ENCODE measurements at regions of chr9 and their contacts with region 1.

Region 1: DNA sequence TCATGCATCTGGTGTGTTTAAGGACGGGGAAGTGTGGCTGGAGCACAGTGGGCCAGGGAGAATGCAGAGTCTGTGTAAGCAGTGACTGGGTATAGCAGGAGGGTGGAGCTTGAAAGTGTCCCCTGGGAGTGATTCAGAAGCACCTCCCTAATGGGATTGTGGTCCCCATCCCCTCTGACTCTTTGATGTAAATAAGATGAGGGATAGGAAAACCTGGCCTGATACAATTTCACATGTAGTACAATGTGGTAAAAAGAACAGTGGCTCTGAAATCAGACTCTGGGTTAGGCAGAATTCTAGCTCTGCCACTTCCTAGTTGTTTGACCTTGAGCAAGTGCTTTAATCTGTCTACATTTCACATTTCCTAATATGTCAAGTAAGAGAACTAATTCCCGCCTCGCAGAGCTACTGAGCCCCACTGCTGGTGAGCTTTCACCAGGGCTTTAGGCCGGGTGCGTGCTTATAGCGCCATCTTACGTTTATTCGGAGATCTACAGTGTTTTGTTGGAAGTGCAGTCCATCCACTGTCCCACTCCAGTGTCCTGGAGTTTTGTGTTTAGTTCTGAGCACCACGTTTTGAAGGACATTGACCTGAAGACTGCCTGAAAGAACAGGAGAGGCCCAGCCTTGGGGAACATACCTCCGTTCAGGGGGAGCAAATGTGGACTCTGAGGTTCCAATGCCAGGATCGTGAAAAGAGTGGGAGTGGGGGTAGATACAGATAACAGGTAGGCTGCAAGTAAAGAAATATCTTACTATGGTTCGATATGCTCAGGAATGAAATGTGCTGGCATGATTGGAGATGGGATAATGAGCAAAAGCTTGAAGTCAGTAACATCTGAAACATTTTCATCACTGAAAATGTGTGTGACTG is 51.2 kb upstream of the TESK1 start:
- DNase-seq: peak in 8 of 10 donors; percentile 54 to 78 (median 67)
- H3K4me3 ChIP-seq: peak overlapping the region in 13 of 59 donors; percentile 1 to 38 (median 19)
- H3K27ac ChIP-seq: peak overlapping the region in 53 of 59 donors; percentile 7 to 86 (median 68)
- H3K27me3 ChIP-seq: no peaks in the 10 kb centered on the region
- CTCF ChIP-seq: peak; percentile 75 to 97 (median 92)

Region 2: DNA sequence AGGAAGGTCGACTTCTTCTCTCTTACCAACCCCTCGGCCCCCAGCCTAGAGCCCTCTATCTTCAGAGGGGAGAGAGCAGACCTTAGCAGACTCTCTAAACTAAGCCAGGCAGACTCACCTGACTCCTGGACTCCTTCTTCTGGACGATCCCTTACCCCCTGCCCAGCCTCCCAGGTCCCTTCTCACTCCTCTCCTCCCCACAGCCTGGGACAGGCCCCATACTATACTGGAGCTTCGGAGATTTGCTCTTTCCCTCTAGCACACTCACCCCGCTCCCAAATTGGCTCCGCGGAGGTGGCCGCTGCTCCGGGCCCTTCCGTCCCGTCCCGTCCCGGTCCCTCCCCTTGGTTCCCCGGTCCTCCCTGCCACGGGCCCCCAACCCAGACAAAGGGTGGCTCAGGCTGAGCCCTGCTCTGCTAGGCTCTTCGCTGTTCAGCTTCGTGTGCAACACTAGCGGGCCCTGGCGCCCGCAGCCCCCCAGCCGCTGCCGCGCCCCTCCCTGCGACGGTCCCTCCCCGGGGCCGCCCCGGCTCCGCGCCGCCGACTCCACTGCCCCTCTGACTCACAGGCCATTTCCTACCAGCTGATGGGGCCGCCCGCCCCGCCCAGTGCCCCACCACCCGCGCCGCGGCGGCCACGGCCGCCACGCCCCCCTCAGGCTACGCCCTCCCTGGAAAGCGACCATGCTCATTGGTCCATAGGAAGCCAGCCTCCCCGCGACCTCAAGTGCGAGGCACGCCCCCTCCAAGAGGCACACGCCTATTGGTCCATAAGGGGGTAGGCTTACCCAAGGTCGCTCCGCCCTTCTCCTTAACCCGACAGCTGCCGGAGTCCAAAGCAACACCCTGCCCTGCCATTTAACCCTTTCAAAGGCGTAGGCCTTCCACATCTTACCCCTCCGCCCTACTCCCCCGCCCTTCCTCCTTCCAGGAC is 442.6 kb before region 1 on chr9:
- intact Hi-C with region 1: loop called (anchors 2 to 5 kb)
- DNase-seq: peak; percentile 97 to 99 (median 99)
- H3K4me3 ChIP-seq: peak overlapping the region; percentile 60 to 99 (median 94)
- H3K27ac ChIP-seq: peak overlapping the region; percentile 72 to 98 (median 92)
- H3K27me3 ChIP-seq: no peaks in the 10 kb centered on the region
- CTCF ChIP-seq: peak in 22 of 56 donors; percentile 11 to 51 (median 26)

Region 3: DNA sequence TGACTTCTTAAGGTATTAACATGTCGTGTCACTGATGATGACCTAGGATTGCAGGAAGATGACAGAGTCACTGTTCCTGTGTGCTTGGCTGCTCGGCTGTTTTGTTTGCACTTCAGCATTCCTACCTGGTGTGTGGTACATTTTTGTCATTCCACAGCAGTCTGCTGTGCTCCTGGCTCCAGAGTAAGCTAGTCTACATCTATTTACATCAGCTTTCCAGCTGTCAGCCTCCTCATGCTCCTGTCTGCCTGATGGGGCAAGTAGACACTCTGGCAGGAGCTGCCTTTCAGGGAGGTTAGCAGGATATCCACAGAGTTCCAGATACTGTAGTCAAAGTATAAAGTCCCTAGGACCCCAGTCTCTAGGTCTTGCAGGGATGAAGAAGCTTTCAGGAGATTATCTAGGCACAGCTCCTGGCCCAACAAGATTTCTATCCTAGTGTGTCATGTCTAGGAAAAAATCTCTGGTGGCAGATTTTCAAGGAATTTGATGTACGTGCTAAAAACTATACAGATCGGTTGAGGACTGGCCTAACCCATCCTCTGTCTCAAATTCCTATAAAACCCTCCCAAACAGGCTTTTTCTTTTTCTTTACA is 35.6 kb before region 1 on chr9:
- intact Hi-C with region 1: loop called in 1 of 2 experiments (anchors 2 kb)
- DNase-seq: no peak
- H3K4me3 ChIP-seq: no peak overlapping the region
- H3K27ac ChIP-seq: peak overlapping the region; percentile 54 to 99 (median 95)
- H3K27me3 ChIP-seq: no peaks in the 10 kb centered on the region
- CTCF ChIP-seq: no peak

Measured in dorsolateral prefrontal cortex (tissue), 120 donors.